Psoas muscle (tissue), 8 donors: ENCODE measurements at regions of chr9 and their contacts with region 1.

Region 1: DNA sequence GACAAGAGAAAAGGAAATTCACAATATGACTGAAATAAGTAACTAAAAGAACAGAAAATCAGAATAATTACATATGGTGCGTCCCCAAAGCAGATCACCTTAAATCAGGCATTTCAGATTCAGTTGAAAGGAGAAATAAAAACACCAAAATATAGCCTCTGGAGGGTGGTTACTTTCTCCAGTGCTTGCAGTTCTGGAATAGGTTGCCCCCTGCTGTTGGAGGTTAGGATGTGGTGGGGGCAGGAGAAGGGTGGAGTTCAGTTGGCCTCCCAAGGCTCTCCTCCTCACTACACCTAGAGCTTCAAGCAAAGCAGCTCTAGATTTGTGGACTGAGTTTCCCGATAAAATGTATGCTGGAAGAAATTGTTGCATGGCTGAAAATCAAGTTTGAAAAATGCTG is 338.2 kb upstream of the TLE4 start:
- DNase-seq: no peak
- ATAC-seq: peak in 2 of 4 donors; percentile 56 to 62
- H3K4me3 ChIP-seq: no peak overlapping the region
- H3K27ac ChIP-seq: no peak overlapping the region
- H3K4me1 ChIP-seq: no peaks in the 10 kb centered on the region
- H3K27me3 ChIP-seq: peaks cover 0 to 3% (median 0%) of the 10 kb centered on the region in 3 donors
- CTCF ChIP-seq: peak; percentile 40

Region 2: DNA sequence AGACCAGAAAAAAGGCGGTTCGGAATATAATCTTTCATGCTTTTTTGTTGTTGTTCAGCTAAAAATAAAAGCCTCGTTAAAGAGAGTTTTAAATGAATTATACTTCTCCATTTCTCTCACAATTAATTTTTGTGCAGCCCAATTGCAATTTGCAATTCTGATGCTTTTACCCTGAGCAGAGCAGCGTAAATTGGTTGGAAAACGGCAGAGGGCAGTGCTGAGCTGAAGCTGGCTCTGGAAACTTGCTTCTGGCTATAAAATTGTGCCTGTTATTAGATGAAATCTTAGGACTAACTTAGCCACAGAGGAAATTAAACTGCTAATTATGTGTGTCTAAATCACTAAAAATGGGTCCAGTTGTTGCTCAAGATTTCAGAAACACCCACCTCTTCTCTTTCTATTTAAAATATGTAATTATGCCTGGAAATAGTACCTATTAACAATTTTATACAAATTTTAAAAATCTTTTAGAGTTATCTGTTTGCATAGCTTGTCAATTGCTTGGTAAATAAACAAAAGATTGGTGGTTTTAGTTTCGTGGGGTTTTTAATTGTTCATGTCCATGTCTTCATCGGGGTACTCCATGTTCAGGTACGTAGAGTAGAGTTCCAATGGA is 103.6 kb before region 1 on chr9:
- intact Hi-C with region 1: loop called (anchors 5 to 10 kb)
- DNase-seq: peak; percentile 43 to 57
- ATAC-seq: peak in 2 of 4 donors; percentile 48 to 76
- H3K4me3 ChIP-seq: no peak overlapping the region
- H3K27ac ChIP-seq: no peak overlapping the region
- H3K4me1 ChIP-seq: no peaks in the 10 kb centered on the region
- H3K27me3 ChIP-seq: no peaks in the 10 kb centered on the region
- CTCF ChIP-seq: peak; percentile 82

Region 3: DNA sequence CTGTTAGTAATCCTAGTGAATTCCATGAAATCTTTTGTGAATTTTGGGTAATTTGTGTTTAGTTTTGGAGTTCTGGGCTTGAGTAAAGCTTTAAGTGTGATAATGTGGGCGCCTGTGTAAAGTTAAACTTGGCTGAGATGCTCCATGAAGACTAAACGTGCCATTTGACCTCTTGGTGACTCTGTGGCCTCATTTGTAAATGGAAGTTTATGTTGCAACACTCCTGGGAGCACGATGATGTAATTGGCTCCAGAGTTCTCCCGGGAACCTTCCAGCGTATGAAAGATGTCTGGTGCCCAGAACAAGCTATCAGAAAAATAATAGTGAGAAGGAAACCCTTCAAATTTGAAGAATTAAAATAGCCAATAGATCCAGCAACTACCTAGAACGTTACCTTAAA is 1319.4 kb after region 1 on chr9:
- intact Hi-C with region 1: no loop called
- DNase-seq: no peak
- ATAC-seq: peak in 2 of 4 donors; percentile 64 to 65
- H3K4me3 ChIP-seq: no peak overlapping the region
- H3K27ac ChIP-seq: no peak overlapping the region
- H3K4me1 ChIP-seq: no peaks in the 10 kb centered on the region
- H3K27me3 ChIP-seq: no peaks in the 10 kb centered on the region
- CTCF ChIP-seq: no peak